PC-9 (cell line): ENCODE measurements at regions of chr1 and their contacts with region 1.

Region 1: DNA sequence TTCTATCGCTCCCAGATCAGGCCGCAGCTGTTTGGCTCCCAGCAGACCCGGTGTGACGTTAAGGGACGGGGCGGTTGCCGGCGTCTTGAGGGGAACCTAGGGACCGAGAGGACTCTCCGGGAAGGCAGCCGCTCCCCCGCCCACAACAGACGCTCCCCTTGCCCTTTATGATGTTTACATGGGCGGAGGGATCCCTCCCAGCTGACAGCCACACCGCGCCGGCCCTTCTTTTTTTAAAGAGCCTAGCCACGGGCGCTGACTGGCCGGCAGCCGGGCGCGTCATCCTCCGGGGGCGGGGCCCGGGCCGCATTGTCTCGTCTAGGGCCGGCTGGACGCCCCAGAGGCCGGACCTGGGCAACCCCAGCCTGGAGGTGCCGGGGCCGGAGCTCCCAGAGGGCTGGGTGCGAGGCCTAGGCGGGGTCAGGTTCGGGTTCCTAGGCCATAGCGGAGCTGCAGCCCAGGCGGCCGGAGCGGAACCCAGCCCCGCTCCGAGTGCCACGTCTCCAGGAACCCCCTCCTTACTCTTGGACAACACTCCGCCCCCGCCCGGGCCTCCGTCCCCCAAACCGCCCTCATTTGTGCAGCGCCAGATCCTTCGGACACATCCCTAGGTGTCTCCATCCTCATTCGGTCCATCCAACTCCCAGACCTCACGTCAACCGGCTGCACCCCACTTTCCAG is at the start of gene PCAT6:
- DNase-seq: peak; percentile 88 to 94
- H3K4me3 ChIP-seq: peak within 1 kb of the TSS; percentile 86
- H3K27ac ChIP-seq: peak within 1 kb of the TSS; percentile 56
- H3K4me1 ChIP-seq: peaks cover 47% of the 10 kb centered on the region
- H3K27me3 ChIP-seq: no peaks in the 10 kb centered on the region
- CTCF ChIP-seq: no peak
- total RNA-seq, gene PCAT6: 1.7 and 3.6 TPM in 2 replicates

Region 2: GRCh38 chr1:202076050-202076511 is 734.7 kb before region 1 on chr1:
- CTCF ChIA-PET with region 1: no interaction called
- POLR2A ChIA-PET with region 1: no interaction called
- intact Hi-C with region 1: no loop called
- DNase-seq: no peak
- H3K4me3 ChIP-seq: no peak overlapping the region
- H3K27ac ChIP-seq: peak overlapping the region; percentile 41
- H3K4me1 ChIP-seq: peaks cover 37% of the 10 kb centered on the region
- H3K27me3 ChIP-seq: no peaks in the 10 kb centered on the region
- CTCF ChIP-seq: no peak

Region 3: DNA sequence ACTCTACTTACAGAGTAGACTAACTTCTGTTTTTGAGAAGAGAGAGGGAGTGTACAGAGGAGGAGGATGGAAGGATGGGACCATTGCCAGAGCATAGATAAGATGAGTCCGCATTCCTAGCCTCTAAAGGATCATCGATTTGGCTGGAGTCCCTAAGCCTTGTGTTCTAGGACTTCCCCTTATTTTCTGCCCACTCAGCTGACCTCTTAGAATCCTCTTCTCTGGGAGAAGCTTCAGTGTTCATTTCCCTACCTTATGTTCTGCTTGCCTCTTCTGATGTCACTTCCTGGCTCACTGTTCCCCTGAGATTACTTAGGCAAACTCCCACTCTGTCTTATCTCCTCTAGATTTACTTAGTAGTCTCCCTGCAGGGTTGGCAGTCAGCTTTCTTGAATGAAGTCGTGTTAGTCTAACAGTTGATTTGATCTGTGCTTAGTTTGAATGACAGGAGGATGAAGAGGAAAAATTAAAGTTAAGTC is 257.2 kb before region 1 on chr1:
- CTCF ChIA-PET with region 1: no interaction called
- POLR2A ChIA-PET with region 1: no interaction called
- intact Hi-C with region 1: no loop called
- DNase-seq: no peak
- H3K4me3 ChIP-seq: no peak overlapping the region
- H3K27ac ChIP-seq: no peak overlapping the region
- H3K4me1 ChIP-seq: 0 out of 2 replicates have a peak, but pooled peaks cover 6% of the 10 kb centered on the region
- H3K27me3 ChIP-seq: no peaks in the 10 kb centered on the region
- CTCF ChIP-seq: no peak

Region 4: DNA sequence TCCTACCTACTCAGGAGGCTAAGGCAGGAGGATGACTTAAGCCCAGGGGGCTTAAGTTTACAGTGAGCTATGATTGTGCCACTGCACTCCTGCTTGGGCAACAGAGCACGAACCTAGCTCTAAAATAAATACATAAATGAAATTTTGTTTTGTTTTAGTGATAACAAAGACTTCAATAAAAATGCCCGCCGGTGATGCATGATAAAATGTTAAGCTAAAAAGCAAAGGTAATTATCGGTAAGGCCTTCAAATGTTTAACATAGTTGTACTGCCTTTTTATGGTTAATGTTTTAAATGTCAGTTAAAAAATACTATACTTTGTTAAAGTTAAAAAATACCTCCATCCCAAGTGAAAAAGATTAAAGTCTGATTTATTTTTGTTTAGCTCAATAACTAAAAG is 29.6 kb before region 1 on chr1:
- CTCF ChIA-PET with region 1: no interaction called
- POLR2A ChIA-PET with region 1: interaction called, 11 read pairs
- intact Hi-C with region 1: no loop called
- DNase-seq: no peak
- H3K4me3 ChIP-seq: no peak overlapping the region
- H3K27ac ChIP-seq: 0 out of 2 replicates have a peak overlapping the region, but pooled peaks have one; percentile 0
- H3K4me1 ChIP-seq: no peaks in the 10 kb centered on the region
- H3K27me3 ChIP-seq: no peaks in the 10 kb centered on the region
- CTCF ChIP-seq: no peak

Region 5: DNA sequence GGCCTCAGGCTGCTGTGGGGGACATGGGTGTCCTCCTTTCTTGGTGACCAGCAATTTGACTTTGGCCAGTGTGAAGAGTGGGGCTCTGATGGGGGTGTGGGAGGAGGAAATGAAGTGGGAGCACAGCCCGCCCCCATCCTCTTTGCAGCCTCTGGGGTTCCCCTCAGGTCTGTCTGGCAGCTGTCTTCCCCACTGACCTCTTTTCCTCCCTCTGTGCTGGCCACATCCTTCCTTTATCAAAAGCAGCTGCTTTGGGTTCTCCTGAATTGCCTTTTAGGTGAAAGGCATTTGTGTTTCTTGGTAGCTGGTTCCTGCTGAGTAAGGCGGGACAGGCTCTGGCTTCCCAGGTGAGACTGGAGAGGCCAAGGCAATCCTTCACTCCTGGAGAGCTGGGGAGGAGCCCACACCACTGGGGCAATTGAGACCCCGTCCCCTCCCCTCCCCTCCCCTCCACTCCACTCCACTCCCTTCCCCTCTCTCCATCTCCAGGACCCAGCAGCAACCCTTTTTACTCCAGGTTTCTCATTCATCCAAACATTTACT is 24.9 kb after region 1 on chr1:
- CTCF ChIA-PET with region 1: no interaction called
- POLR2A ChIA-PET with region 1: no interaction called
- intact Hi-C with region 1: loop called (anchors 2 kb)
- DNase-seq: no peak
- H3K4me3 ChIP-seq: no peak overlapping the region
- H3K27ac ChIP-seq: 0 out of 2 replicates have a peak overlapping the region, but pooled peaks have one; percentile 3
- H3K4me1 ChIP-seq: peaks cover 39% of the 10 kb centered on the region
- H3K27me3 ChIP-seq: no peaks in the 10 kb centered on the region
- CTCF ChIP-seq: no peak

Region 6: DNA sequence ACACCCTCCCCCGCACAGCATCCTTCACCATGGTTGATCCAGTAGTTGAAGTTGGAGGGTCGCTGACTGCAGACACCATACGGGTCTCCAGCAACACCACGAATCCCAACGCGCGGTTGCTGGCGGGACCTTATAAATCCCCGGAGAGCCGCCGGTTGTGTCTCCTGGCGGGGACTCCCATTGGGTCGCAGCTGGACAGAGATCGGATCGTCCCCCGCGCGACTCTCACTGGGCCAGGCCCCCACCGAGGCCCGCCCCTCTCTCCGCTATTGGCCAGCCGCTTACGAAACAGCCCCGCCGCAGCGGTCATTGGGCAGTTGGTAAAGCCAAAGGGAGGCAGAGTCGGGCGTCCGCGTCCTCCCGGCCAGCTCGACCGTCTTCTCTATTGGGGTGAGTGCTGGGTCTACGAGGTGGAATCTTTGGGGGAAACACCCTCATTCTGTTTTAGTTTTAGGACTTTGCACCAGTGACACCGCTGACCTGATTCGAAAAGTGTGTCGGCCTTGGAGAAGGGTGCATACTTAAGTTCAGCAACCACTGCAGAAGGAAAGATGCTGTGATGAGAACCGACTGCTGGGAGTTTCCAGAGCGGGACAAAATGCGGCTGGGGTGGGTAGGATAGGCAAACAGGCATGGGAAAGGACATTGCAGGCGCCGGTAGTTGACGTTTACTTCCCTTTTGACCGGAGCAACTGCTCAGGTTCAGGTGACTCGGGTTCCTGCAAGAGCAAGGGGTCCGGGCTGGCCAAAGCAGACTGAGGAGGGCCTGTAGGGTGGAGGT is 50.9 kb after region 1 on chr1:
- CTCF ChIA-PET with region 1: no interaction called
- POLR2A ChIA-PET with region 1: interaction called, 6 read pairs
- intact Hi-C with region 1: loop called (anchors 2 kb)
- DNase-seq: peak; percentile 87 to 94
- H3K4me3 ChIP-seq: peak overlapping the region; percentile 57
- H3K27ac ChIP-seq: no peak overlapping the region
- H3K4me1 ChIP-seq: peaks cover 22% of the 10 kb centered on the region
- H3K27me3 ChIP-seq: no peaks in the 10 kb centered on the region
- CTCF ChIP-seq: no peak

Region 7: DNA sequence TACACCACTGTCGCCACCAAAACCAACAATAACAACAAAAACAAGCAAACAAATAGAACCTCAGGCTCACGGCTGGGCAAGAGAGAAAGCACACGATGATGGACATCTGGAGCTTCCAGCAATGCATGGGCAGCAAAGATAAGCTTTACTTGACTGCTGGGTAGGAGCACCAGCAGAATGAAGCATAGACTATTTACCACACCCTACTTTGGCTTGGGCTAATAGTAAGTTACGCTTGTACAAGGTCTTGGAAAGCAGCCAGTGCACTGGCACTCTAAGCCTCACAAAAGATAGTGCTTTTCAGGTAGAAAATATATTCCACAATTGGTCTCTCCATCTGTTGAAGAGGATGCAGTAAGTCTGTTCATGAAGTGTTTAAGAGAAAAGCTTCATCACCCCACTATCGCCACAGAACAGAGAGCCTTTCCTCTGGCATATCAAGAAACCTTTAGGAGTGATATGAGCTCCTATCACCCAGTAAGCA is 133.7 kb after region 1 on chr1:
- CTCF ChIA-PET with region 1: no interaction called
- POLR2A ChIA-PET with region 1: interaction called, 10 read pairs
- intact Hi-C with region 1: no loop called
- DNase-seq: no peak
- H3K4me3 ChIP-seq: no peak overlapping the region
- H3K27ac ChIP-seq: no peak overlapping the region
- H3K4me1 ChIP-seq: no peaks in the 10 kb centered on the region
- H3K27me3 ChIP-seq: no peaks in the 10 kb centered on the region
- CTCF ChIP-seq: no peak

Region 8: GRCh38 chr1:203017692-203018091 is 206.9 kb after region 1 on chr1:
- CTCF ChIA-PET with region 1: no interaction called
- POLR2A ChIA-PET with region 1: no interaction called
- intact Hi-C with region 1: no loop called
- DNase-seq: no peak
- H3K4me3 ChIP-seq: no peak overlapping the region
- H3K27ac ChIP-seq: no peak overlapping the region
- H3K4me1 ChIP-seq: no peaks in the 10 kb centered on the region
- H3K27me3 ChIP-seq: no peaks in the 10 kb centered on the region
- CTCF ChIP-seq: no peak

Region 9: GRCh38 chr1:203914258-203914657 is 1103.5 kb after region 1 on chr1:
- CTCF ChIA-PET with region 1: no interaction called
- POLR2A ChIA-PET with region 1: no interaction called
- intact Hi-C with region 1: no loop called
- DNase-seq: no peak
- H3K4me3 ChIP-seq: no peak overlapping the region
- H3K27ac ChIP-seq: no peak overlapping the region
- H3K4me1 ChIP-seq: peaks cover 24% of the 10 kb centered on the region
- H3K27me3 ChIP-seq: no peaks in the 10 kb centered on the region
- CTCF ChIP-seq: no peak